ENCODE measurements at regions of chr19 and their contacts with region 1.

Region 1: GRCh38 chr19:41263850-41264580 is at the start of gene HNRNPUL1:
- DNase-seq: peak; percentile 98
- ATAC-seq: peak; percentile 77
- H3K4me3 Mint-ChIP-seq: peak within 1 kb of the TSS; percentile 96
- H3K27ac Mint-ChIP-seq: peak within 1 kb of the TSS; percentile 99
- H3K4me1 Mint-ChIP-seq: peaks cover 48% of the 10 kb centered on the region
- H3K27me3 Mint-ChIP-seq: no peaks in the 10 kb centered on the region
- CTCF ChIP-seq: no peak
- total RNA-seq, gene HNRNPUL1: 235 and 244 TPM in 2 replicates

Region 2: DNA sequence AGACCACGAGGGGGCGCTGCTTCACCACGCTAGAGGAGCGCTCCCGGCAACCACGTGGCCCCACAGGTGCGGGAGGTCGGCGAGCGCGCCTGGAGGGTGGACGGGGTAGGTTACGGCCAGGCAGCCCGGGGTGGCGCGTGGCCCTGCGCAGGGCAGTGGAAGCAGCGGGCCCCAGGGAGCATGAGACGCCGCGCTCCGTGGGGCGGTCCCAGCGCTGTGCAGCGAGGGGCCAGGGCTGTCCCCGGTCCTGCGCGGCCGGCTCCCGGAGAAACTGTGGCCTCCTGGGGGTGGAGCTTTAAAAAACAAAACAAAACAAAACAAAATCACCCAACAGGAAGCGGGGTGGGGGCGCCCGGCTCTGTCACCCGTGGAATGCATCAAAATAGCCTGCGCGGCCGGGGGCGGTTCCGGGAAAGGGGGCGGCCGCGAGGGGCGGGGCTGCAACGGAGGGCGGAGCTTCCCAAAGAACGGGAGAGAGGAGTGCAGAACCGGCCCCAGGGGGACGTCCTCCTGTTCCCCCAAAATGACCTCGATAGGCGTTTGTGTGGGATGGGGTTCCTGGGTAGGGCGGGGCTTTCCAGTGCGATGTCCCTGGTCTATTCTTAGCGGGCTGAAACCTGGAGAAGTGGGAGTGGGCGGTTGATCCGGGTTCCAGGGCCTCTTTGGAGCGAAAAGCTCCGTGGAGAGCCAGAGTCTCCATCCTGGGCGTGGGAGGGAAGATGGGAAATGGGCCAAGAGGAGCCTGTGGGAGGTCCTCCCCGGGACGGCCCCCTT is 600.9 kb before region 1 on chr19:
- CTCF ChIA-PET with region 1: interaction called, 3 read pairs
- POLR2A ChIA-PET with region 1: interaction called, 4 read pairs
- intact Hi-C with region 1: loop called (anchors 1 kb)
- DNase-seq: peak; percentile 95
- ATAC-seq: peak; percentile 91
- H3K4me3 Mint-ChIP-seq: peak overlapping the region; percentile 85
- H3K27ac Mint-ChIP-seq: peak overlapping the region; percentile 76
- H3K4me1 Mint-ChIP-seq: peaks cover 17% of the 10 kb centered on the region
- H3K27me3 Mint-ChIP-seq: no peaks in the 10 kb centered on the region
- CTCF ChIP-seq: peak; percentile 68

Region 3: DNA sequence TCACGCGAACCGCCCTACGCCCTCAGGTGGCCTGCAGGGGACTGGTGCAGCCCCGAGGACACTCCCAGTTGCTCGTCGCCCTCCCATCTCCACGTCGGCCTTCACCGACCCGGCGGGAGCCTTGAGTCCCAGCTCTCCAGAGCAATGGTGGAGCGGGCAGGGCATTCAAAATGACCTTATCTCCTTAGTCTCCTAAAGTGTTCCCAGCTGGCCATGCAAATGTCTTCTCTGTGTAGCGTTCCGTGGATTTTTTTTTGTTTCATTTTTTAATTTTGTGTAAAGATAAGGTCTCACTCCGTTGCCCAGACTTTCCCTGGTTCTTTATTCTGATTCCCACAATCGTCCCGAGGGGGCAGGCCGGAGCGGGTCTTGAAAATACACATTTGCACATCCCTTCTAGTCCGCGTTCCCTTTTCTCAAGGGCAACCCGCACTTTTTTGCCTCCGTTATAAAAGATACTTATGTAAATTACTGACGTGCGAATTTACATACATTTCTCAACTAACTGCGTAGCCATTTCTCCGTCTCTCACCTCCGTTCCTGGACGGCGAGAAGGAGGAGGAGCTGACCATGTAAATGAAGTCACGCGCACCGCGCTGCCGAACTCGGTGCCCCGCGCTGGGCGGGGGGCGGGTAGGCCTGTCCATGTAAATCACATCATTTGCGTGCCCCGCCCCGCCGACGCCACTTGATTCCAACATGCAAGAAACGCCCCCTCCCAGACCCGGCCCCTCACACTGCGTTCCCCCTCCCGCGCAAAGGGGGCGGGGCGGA is 465.6 kb before region 1 on chr19:
- CTCF ChIA-PET with region 1: no interaction called
- POLR2A ChIA-PET with region 1: interaction called, 5 read pairs
- intact Hi-C with region 1: loop called (anchors 2 kb)
- DNase-seq: peak; percentile 57
- ATAC-seq: peak; percentile 38
- H3K4me3 Mint-ChIP-seq: peak overlapping the region; percentile 95
- H3K27ac Mint-ChIP-seq: peak overlapping the region; percentile 99
- H3K4me1 Mint-ChIP-seq: peaks cover 62% of the 10 kb centered on the region
- H3K27me3 Mint-ChIP-seq: no peaks in the 10 kb centered on the region
- CTCF ChIP-seq: no peak

Region 4: GRCh38 chr19:41298348-41298964 is 34.4 kb after region 1 on chr19:
- CTCF ChIA-PET with region 1: interaction called, 3 read pairs
- POLR2A ChIA-PET with region 1: interaction called, 53 read pairs
- intact Hi-C with region 1: loop called (anchors 1 kb)
- DNase-seq: no peak
- ATAC-seq: peak; percentile 15
- H3K4me3 Mint-ChIP-seq: peak overlapping the region; percentile 72
- H3K27ac Mint-ChIP-seq: peak overlapping the region; percentile 96
- H3K4me1 Mint-ChIP-seq: peaks cover 71% of the 10 kb centered on the region
- H3K27me3 Mint-ChIP-seq: no peaks in the 10 kb centered on the region
- CTCF ChIP-seq: no peak

Region 5: DNA sequence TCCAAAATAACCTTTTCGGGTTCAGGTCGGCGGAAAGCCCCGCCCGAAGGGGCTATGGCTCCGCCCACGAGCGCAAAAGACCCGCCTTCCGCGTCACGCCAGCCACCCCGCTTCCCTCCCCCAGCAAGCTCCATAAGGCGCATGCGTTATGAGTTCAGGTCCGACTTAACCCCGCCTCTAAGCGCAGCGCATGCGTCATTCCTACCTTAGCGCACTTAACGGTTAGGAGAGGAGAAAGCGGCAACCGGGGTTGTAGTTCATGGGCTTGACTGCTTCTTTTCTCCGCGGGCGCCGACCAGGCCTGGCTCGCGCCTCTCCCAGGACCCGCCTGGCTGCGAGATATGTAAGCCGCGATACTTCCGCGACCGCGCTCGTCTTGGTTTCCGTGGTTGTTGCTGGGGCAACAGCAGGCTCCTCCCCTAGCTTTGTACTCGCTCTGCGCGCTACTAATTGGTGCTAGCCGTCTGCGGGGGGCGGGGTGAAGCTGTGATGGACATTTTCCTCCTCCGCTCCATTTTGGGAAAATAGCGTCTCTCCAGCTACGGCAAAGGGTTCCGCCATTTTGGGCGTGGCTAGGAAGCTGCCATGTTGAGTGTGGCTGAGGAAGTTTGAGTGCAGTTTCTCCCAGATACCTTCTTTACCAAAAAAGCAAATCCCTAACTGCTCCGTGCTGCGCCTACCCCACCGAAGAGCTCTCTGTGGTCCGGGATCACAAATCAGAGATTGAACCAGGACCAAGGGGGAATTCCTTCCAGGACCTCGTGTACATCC is 99.9 kb after region 1 on chr19 and contains the start of gene B9D2:
- CTCF ChIA-PET with region 1: interaction called, 5 read pairs
- POLR2A ChIA-PET with region 1: interaction called, 39 read pairs
- intact Hi-C with region 1: loop called (anchors 1 kb)
- DNase-seq: peak; percentile 93
- ATAC-seq: peak; percentile 92
- H3K4me3 Mint-ChIP-seq: peak within 1 kb of the TSS; percentile 96
- H3K27ac Mint-ChIP-seq: peak within 1 kb of the TSS; percentile 100
- H3K4me1 Mint-ChIP-seq: peaks cover 34% of the 10 kb centered on the region
- H3K27me3 Mint-ChIP-seq: no peaks in the 10 kb centered on the region
- CTCF ChIP-seq: no peak
- total RNA-seq, gene B9D2: 11.7 and 14.2 TPM in 2 replicates

Measured in activated B cell treated with CpG ODN at 0.5 μM for 24 hours (primary cell).